Tibial artery (tissue), 4 donors: ENCODE measurements at regions of chr1 and their contacts with region 1.

Region 1: DNA sequence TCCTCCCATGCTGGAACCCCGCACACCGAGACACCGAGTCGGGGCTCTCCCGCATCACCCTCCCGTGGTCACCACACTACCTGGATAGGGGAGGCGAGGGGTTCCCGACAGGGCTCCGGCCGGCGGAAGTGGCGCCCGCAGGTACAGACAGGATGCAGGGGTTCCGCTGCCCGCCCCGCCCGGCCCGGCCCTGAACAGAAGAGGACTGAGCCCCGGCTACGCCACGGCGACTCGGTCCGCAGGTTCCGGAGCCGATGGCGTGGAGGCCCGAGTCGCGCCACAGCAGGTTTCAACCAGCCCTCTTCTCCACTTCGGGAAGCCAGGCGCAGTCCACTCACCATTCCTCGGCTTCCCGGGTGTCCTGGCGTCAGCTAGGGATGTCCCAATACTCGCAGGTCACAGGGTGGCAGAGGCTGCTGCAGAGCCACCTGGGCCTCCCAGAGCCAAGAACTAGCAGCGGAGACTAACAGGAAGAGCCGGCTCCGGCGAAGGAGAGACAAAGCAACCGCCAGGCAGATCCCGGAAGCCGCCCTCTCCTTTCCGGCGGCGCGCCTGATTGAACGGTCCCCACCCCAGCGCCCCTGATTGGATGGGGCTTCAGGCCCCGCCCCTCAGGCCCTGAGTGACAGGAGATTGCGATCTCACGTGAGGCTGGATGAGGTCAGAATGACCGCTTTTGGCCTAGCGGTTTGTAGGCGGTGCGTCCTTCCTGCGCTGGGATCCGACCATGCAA is at the start of gene ZNF669:
- DNase-seq: peak; percentile 98
- H3K4me3 ChIP-seq: peak within 1 kb of the TSS; percentile 79 to 90
- H3K27ac ChIP-seq: peak within 1 kb of the TSS; percentile 81 to 86
- H3K4me1 ChIP-seq: peaks cover 0 to 18% (median 11%) of the 10 kb centered on the region in 4 donors
- H3K27me3 ChIP-seq: no peaks in the 10 kb centered on the region
- CTCF ChIP-seq: no peak

Region 2: GRCh38 chr1:246931549-246932365 is 172.3 kb before region 1 on chr1 and contains the start of gene AHCTF1:
- intact Hi-C with region 1: loop called (anchors 10 kb)
- DNase-seq: peak; percentile 95 to 99
- H3K4me3 ChIP-seq: peak within 1 kb of the TSS; percentile 95 to 99
- H3K27ac ChIP-seq: peak within 1 kb of the TSS; percentile 95 to 98
- H3K4me1 ChIP-seq: peaks cover 0 to 42% (median 18%) of the 10 kb centered on the region in 4 donors
- H3K27me3 ChIP-seq: no peaks in the 10 kb centered on the region
- CTCF ChIP-seq: peak in 1 of 2 experiments; percentile 31

Region 3: DNA sequence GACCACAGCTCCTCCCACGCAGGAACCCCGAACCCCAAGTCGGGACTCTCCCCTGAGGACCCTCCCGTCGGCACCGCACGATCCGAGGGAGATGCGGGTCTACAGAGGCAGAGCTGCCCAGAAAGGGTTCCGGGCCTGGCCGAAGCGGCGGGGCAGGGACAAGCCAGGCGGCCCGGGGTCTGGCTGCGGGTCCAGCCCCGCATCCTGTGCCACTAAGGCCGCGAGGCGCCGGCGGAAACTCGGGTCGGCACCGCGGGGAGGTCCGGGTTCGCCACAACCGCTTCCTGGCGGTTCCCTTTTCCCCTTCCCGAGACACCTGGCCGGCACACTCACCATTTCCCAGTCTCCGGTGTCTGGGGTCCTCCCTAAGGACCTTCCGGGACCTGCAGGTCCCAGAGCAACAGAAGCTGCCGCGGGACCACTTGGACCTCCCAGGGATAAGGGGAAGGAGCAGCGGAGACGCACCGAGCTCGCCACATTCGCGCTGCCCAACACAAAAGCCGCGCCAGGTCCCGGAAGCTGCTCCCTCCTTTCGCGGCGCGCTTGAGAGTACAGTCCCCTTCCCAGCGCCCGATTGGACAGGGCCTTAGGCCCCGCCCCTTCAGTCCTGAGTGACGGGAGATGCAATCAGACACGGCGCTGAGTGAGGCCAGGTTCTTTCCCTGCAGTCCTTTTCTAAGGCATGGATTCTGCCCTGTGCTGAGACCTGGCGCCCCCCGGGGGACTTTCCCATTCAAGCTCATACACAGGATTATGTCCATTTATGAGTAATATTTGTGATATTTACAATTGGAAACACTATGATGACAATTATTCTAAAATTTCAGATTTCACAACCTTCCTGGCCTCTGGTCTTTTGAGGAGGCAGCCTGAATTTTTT is 25.5 kb before region 1 on chr1 and contains the start of gene ZNF670:
- intact Hi-C with region 1: loop called (anchors 2 kb)
- DNase-seq: peak; percentile 97 to 98
- H3K4me3 ChIP-seq: peak within 1 kb of the TSS; percentile 82 to 85
- H3K27ac ChIP-seq: peak within 1 kb of the TSS; percentile 79 to 80
- H3K4me1 ChIP-seq: peaks cover 0 to 17% (median 11%) of the 10 kb centered on the region in 4 donors
- H3K27me3 ChIP-seq: no peaks in the 10 kb centered on the region
- CTCF ChIP-seq: no peak

Region 4: DNA sequence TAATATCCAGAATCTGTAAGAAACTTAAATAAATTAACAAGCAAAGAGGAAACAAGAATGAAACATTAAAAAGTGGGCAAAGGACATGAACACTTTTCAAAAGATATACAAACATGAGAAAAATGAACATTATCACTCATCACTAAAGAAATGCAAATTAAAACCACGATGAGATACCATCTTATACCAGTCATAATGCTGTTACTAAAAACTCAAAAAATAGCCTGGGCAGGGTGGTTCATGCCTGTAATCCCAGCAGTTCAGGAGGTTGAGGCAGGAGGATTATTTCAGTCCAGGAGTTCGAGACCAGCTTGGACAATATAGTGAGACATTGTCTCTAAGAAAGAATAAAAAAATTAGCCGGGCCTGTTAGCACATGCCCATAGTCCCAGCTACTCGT is 61.6 kb after region 1 on chr1:
- intact Hi-C with region 1: no loop called
- DNase-seq: no peak
- H3K4me3 ChIP-seq: no peak overlapping the region
- H3K27ac ChIP-seq: no peak overlapping the region
- H3K4me1 ChIP-seq: no peaks in the 10 kb centered on the region
- H3K27me3 ChIP-seq: no peaks in the 10 kb centered on the region
- CTCF ChIP-seq: no peak

Region 5: DNA sequence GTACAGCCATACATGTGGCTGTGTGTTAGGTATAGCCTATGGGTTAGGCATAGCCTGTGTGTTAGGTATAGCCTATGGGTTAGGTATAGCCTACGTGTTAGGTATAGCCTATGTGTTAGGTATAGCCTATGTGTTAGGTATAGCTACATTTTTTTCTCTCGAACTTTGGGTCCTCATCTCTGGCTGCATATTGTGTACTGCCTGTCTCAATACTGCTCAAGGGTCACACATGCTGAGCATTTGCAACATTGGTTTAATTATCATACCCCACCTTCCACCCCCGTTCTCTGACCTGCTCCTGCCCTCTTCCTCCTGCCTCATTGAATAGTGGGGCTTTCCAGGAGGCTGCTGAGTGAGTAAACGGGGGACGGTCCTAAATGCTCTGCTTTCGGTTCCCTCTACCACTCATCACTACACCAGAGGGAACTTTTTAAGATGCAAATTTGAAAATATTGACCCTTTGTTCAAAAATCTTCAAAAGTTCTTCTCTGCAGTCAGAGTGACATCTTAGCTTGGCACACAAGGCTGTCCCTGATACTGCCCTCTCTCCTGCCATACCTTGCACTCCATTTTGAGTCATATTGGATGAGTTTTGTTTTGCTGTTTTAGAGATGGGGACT is 336.1 kb after region 1 on chr1:
- intact Hi-C with region 1: no loop called
- DNase-seq: no peak
- H3K4me3 ChIP-seq: no peak overlapping the region
- H3K27ac ChIP-seq: no peak overlapping the region
- H3K4me1 ChIP-seq: no peaks in the 10 kb centered on the region
- H3K27me3 ChIP-seq: peaks cover 0 to 2% of the 10 kb centered on the region in 2 donors
- CTCF ChIP-seq: no peak